ENCODE measurements at regions of chr20 and their contacts with region 1.

Region 1: DNA sequence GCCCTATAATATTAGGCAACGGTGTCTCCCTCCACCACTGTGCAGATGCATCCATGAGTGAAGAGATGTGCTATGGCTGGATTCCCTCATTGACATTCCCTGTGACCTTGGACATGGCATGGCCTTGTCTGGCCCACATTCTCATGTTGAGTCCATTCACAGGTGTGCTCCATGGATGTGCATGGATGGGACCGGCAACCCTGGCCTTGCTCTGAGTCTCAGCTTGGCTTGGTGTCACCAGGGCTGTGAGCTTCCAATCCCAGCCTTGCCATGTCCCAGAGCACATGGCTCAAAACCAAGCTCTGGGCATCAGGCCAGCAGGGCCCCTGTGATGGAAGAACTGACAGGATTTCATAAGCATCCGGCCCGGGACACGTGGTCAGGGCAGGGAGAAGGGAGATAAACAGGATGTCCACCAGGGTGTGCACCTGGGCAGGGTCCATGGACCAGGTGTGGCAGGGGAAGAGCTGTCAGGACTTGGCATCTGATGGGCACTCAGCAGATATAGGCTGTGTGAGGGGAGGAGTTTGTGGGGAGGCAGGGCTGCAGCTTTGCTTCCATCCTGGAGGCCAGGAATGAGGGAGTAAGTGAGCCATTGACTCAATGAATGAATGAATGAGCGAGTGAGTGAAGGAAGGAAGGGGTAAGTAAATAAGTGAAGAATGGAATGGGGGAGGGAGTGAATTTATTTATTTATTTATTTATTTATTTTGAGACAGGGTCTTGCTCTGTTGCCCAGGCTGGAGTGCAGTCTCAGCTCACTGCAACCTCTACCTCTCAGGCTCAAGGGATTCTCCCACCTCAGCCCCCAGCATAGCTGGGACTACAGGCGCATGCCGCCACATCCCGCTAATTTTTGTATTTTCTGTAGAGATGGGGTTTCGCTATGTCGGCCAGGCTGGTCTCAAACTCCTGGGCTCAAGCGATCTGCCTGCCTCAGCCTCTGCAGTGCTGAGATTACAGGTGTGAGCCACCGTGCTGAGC is 15.7 kb downstream of the NRSN2 start:
- DNase-seq: peak; percentile 89
- H3K4me3 ChIP-seq: no peak overlapping the region
- H3K27ac ChIP-seq: no peak overlapping the region
- H3K4me1 ChIP-seq: peaks cover 7% of the 10 kb centered on the region
- H3K27me3 ChIP-seq: no peaks in the 10 kb centered on the region
- CTCF ChIP-seq: peak in 1 of 2 donors; percentile 39
- POLR2A ChIP-seq: no peak

Region 2: GRCh38 chr20:266596-267562 is 95.7 kb before region 1 on chr20:
- CTCF ChIA-PET with region 1: no interaction called
- POLR2A ChIA-PET with region 1: no interaction called
- dilution Hi-C with region 1: no loop called
- intact Hi-C with region 1: no loop called
- DNase-seq: peak; percentile 76
- H3K4me3 ChIP-seq: peak overlapping the region in 2 of 3 experiments; percentile 31 to 50
- H3K27ac ChIP-seq: no peak overlapping the region
- H3K4me1 ChIP-seq: peaks cover 3% of the 10 kb centered on the region
- H3K27me3 ChIP-seq: peaks cover 0 to 2% of the 10 kb centered on the region in 2 experiments
- CTCF ChIP-seq: peak; percentile 97 to 98
- POLR2A ChIP-seq: peak; percentile 53

Region 3: GRCh38 chr20:381581-382290 is 19.2 kb after region 1 on chr20:
- CTCF ChIA-PET with region 1: interaction called, 8 read pairs
- POLR2A ChIA-PET with region 1: no interaction called
- dilution Hi-C with region 1: no loop called
- intact Hi-C with region 1: loop called (anchors 1 kb)
- DNase-seq: peak; percentile 48
- H3K4me3 ChIP-seq: peak overlapping the region; percentile 62 to 92 (median 88)
- H3K27ac ChIP-seq: no peak overlapping the region
- H3K4me1 ChIP-seq: peaks cover 6% of the 10 kb centered on the region
- H3K27me3 ChIP-seq: no peaks in the 10 kb centered on the region
- CTCF ChIP-seq: no peak
- POLR2A ChIP-seq: peak; percentile 36

Region 4: DNA sequence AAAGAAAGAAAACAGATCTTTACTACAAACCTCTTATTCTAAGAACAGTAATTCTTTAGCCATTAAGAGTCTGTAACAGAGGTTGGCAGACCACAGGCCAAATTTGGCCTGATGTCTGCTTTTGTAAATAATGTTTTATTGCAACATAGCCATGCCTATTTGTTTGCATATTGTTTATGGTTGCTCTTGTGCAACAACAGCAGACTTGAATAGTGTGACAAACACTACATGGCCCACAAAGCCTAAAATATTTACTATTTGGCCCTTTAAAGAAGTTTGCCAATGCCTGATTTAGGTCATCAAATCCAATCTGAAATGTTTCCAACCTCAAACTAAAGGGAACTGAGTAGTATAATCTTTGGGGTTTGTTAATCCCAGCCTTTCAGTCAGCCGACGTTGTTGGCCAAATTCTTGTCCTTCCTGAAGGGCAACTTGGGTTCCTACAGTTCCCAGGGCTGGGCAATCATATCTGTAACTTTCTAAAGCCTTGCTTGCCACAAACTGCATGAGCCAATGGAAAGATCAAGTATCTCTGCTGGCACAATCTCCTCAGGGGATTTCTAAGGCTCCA is 133.6 kb after region 1 on chr20:
- CTCF ChIA-PET with region 1: no interaction called
- POLR2A ChIA-PET with region 1: no interaction called
- dilution Hi-C with region 1: no loop called
- intact Hi-C with region 1: no loop called
- DNase-seq: no peak
- H3K4me3 ChIP-seq: no peak overlapping the region
- H3K27ac ChIP-seq: no peak overlapping the region
- H3K4me1 ChIP-seq: no peaks in the 10 kb centered on the region
- H3K27me3 ChIP-seq: no peaks in the 10 kb centered on the region
- CTCF ChIP-seq: no peak
- POLR2A ChIP-seq: no peak